ENCODE measurements at regions of chr3 and their contacts with region 1.

Region 1: GRCh38 chr3:59857589-59858346 is 807.9 kb upstream of the CFAP20DC start:
- DNase-seq: peak; percentile 89
- H3K4me3 ChIP-seq: no peak overlapping the region
- H3K27ac ChIP-seq: no peak overlapping the region
- H3K4me1 ChIP-seq: peaks cover 0 to 8% (median 0%) of the 10 kb centered on the region in 6 donors
- H3K27me3 ChIP-seq: no peaks in the 10 kb centered on the region
- CTCF ChIP-seq: peak; percentile 73 to 92 (median 87)
- POLR2A ChIP-seq: no peak

Region 2: DNA sequence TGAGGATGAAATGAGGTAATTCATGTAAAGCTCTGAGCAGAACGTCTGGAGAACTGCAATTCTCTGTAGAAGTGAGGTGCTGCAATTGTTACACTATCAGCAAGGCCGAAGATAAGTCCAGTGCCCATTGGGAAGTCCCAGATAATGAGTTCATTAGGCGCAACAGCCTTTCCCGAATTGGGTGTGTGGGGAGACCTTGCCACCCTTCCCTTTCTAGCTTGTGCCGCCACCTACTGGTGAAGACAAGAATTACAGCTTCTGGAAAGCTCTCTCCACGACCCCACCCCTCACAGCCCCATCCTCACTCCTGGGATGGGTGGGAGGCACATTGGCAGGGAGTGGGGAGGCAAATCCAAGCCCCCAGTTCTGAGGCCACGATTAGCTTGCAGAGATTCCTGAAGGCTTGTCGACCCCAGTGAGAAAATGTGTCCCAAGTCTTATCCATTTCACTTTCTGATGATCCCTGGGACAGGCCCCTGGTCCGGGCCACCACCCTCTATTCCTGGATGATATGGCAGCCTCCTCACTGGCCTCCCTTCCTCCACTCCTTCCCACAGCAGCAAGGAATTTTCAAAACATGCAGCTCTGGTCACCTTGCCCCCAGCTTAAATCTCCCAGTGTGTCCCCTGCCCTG is 1227.6 kb before region 1 on chr3:
- intact Hi-C with region 1: loop called (anchors 10 kb)
- DNase-seq: no peak
- H3K4me3 ChIP-seq: no peak overlapping the region
- H3K27ac ChIP-seq: peak overlapping the region in 7 of 8 donors; percentile 3 to 87 (median 78)
- H3K4me1 ChIP-seq: peaks cover 3 to 53% (median 31%) of the 10 kb centered on the region in 6 donors
- H3K27me3 ChIP-seq: peaks cover 0 to 11% (median 0%) of the 10 kb centered on the region in 7 donors
- CTCF ChIP-seq: peak; percentile 69 to 95 (median 90)
- POLR2A ChIP-seq: no peak

Region 3: DNA sequence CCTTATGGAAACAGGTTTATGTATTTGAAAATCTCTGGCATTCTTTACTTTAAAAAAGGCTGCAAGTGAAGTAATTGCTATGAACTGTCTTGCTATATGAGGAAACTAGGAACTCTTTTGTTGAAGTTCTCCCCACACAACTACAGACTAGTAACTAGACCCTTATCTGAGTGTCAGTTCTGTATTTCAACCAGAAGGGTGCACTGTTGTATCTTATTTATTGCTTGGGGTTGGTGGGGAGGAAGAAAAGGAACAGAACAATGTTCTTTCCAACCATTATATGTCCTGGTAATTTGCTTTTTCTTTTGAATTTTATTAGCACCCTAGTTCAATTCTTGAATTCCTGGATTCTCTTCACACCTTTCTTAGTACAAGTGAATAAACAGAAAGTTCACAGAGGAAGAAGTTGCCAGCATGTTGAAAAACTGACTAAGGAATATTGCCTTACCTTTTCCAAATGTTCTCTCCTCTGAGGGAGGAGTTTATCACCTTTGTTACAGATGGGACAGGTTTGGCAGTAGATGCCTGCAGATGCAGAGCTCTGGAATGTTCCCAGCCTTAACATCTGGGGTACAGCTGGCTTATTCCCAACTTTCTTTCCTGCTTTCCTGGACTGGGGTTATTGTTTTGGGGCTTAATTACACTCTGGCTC is 645.5 kb before region 1 on chr3:
- intact Hi-C with region 1: loop called (anchors 5 kb)
- DNase-seq: no peak
- H3K4me3 ChIP-seq: no peak overlapping the region
- H3K27ac ChIP-seq: no peak overlapping the region
- H3K4me1 ChIP-seq: peaks cover 0 to 7% (median 0%) of the 10 kb centered on the region in 6 donors
- H3K27me3 ChIP-seq: no peaks in the 10 kb centered on the region
- CTCF ChIP-seq: peak; percentile 56 to 86 (median 74)
- POLR2A ChIP-seq: no peak

Region 4: DNA sequence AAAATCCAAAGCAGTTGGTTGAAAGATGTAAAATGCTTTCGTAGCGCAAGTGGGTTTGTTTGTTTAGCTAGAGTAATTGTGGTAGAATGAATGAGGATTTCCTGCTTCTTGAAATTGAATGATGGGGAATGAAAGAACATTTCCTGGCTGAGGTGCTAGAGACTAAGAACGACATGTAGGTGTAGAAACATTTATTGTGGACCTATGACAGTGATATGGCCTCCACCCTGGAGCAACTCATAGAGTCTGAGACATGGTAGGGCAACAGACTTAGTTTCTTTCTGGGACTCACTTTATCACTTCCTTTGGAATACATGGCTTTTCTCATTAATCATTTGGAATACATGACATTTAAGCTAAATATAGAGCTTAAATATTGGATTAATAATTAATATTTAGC is 340.3 kb before region 1 on chr3:
- intact Hi-C with region 1: no loop called
- DNase-seq: no peak
- H3K4me3 ChIP-seq: no peak overlapping the region
- H3K27ac ChIP-seq: no peak overlapping the region
- H3K4me1 ChIP-seq: no peaks in the 10 kb centered on the region
- H3K27me3 ChIP-seq: no peaks in the 10 kb centered on the region
- CTCF ChIP-seq: no peak
- POLR2A ChIP-seq: no peak

Region 5: DNA sequence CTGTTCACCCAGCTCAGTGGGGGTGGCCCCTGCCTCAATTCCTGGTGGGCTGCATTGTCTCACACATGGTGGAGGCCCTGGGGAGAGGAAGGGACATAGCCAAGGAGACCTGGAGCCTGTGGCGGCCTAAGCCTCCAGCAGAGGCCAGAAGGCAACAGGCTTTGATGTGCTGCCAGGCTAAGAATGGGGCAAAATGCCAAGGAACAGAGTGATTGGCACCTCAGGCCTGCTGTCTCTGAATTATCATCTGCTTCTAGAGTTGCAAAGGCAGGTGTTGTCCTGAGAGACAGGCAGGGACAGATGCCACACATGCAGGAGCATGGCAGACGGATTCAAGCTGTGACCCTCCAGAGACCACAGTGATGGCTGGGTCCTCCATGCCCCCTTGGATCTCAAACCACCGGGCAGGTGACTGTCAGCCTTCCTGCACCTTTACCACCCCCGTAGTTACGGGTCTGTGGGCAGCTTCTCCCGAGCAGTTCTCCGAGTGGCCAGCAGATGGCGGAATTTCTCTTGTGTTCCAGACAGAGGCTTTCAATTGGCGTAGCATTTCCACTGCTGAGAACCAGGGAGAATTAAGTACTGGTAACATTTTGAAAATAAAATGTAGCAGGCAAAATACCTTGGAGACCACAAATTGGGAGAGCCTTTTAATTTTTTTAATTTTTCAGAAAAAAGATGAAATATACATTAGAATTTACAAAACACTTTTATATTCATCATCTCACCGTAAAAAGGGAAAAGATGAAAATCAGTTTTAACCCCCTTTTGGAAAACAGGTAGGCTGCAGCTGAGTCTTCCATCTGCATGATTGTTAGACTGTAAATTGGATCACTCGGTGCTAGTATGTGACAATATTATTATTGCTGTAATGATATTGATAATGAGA is 282.4 kb before region 1 on chr3:
- intact Hi-C with region 1: loop called (anchors 5 kb)
- DNase-seq: peak; percentile 93
- H3K4me3 ChIP-seq: no peak overlapping the region
- H3K27ac ChIP-seq: no peak overlapping the region
- H3K4me1 ChIP-seq: peaks cover 0 to 9% (median 4%) of the 10 kb centered on the region in 6 donors
- H3K27me3 ChIP-seq: peaks cover 0 to 4% (median 0%) of the 10 kb centered on the region in 7 donors
- CTCF ChIP-seq: peak; percentile 86 to 99 (median 94)
- POLR2A ChIP-seq: no peak